Aorta (tissue), 5 donors: ENCODE measurements at regions of chr1 and their contacts with region 1.

Region 1: DNA sequence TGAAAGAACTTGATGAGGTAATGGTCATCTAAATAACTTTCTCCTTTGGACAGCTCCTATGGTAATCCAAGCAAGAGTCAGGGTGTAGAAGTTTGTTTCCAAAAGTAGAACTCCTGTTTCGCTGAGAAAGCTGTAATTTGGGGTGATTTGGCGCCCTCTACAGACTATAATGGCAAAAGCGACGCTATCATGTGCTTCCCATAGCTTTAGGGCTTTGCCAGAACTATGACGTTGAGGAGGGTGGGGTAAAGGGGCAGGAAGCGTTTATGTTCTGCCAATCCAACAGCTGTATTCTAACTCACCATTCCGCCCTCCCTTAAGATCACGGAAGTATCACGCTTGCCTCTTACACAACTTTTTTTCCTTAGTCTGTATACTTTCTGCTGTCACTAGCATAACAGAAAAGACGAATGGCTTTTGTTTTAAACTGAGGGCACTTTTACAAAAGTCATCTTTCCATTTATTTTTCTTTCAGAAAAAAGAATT is at the start of gene FMO4:
- DNase-seq: peak; percentile 83 to 92
- ATAC-seq: peak; percentile 99
- H3K4me3 ChIP-seq: peak within 1 kb of the TSS; percentile 70 to 93
- H3K27ac ChIP-seq: peak within 1 kb of the TSS; percentile 71 to 95
- H3K4me1 ChIP-seq: peaks cover 0 to 3% of the 10 kb centered on the region in 2 donors
- H3K27me3 ChIP-seq: no peaks in the 10 kb centered on the region
- total RNA-seq, gene FMO4: 9.6 to 12.3 TPM

Region 2: DNA sequence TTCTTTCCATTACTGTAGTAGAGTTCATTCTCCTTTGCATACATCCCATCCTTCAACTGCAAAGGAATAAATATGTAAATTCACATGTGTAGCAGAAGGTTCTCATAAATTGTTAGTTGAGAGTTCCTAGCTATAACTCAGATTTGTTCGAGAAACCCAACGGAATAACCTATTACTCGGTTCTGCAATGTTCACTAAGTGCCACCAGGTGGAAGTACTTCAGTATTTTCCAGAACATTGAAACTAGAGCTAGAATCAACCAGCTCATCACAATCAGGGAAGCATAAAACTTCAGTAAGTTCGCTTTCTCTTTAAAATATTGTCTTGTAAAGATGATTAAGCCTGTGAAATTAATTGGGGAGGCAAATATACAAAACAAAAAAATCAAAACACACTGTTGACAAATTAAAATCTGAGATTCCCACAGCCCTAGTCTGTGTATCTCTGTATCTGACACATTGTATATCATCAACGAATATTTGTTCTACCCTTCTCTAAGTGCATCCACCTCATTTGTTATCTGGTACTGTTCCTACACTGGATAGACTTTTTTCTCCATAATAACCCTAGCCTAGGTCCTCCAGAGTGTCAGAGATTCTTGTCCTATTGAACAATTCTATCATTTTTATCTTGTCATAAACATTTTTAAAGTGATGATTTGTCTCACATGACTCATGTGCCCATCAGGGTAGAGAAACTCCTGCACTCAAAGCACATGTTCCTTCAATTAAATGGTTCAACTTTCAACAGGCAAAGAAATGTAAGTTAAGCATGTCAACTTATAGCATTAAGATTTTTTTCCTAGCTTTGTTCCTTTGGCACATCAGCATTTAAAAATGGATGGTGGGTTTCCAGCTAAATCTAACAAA is 346.6 kb before region 1 on chr1:
- intact Hi-C with region 1: loop called (anchors 5 kb)
- DNase-seq: no peak
- ATAC-seq: peak; percentile 85
- H3K4me3 ChIP-seq: no peak overlapping the region
- H3K27ac ChIP-seq: no peak overlapping the region
- H3K4me1 ChIP-seq: peaks cover 0 to 2% of the 10 kb centered on the region in 2 donors
- H3K27me3 ChIP-seq: no peaks in the 10 kb centered on the region

Region 3: DNA sequence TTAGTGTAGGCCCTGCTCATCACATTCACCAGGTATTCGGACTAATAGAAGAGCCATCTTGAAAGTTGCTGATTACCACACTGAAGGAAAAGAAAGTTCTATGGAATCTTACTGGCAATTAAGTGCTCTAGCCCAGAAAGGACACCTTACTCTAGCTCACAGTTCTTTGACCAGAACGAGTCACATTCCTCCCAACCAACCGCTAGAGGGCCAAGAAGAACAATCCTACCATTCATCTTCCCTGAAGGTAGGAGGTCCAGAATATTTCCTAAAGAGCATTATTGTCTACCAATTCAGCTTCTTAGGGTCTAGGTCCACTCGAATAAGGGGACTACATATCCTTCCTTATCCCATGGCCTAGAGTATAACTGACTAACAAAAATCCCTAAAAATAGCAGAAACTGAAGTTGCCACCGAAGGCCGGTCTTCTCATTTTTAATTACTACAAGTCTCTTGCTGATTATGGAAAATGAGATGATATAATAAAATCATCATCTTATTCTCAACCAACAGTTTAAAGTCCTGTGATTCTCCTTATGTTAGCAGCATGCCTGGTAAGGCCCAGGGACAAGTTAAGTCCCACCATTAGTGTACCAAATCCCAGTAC is 68.3 kb before region 1 on chr1:
- intact Hi-C with region 1: loop called (anchors 5 kb)
- DNase-seq: no peak
- ATAC-seq: no peak
- H3K4me3 ChIP-seq: no peak overlapping the region
- H3K27ac ChIP-seq: no peak overlapping the region
- H3K4me1 ChIP-seq: no peaks in the 10 kb centered on the region
- H3K27me3 ChIP-seq: no peaks in the 10 kb centered on the region

Region 4: DNA sequence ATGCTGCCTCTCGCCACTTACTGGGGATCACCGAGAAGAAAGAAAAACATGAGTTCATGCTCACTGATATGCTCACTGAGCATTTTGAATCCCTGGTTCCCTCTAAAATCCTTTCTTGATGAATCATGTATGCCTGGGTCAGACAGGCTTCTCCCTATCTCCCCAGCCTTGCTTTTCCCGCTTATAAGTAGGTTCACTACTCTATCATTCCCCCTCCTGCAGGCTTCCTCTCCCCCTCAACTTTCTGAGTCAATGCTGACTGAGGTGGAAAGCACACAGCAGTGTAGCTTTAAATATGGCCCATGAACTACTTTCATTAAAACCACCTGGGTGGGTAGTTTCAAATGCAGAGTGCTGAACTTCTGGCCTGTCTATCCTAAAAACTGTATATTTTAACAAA is 41.8 kb after region 1 on chr1:
- intact Hi-C with region 1: loop called in 1 of 2 experiments (anchors 5 kb)
- DNase-seq: no peak
- ATAC-seq: peak; percentile 11
- H3K4me3 ChIP-seq: no peak overlapping the region
- H3K27ac ChIP-seq: no peak overlapping the region
- H3K4me1 ChIP-seq: no peaks in the 10 kb centered on the region
- H3K27me3 ChIP-seq: no peaks in the 10 kb centered on the region

Region 5: DNA sequence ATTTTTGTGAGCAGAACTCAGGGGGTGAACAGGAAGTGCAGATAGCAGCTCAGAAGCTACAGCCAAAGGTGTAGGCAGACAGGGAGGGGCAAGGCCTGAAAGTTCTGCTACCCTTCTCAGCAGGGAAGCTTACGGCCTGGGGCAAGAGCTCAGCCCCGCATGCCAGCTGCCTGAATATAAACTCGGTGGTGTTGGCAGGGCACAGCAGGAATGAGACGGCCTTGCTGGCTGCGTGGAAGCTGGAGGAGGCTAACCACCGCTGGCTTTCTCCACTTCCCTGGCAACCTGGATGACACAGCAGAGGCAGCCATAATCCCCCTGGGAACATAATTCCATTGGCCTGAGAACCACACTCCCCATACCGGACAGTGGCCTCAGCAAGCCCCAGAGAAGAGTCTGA is 89.5 kb after region 1 on chr1:
- intact Hi-C with region 1: loop called in 1 of 2 experiments (anchors 10 kb)
- DNase-seq: peak; percentile 60 to 83
- ATAC-seq: no peak
- H3K4me3 ChIP-seq: no peak overlapping the region
- H3K27ac ChIP-seq: peak overlapping the region; percentile 23 to 72
- H3K4me1 ChIP-seq: no peaks in the 10 kb centered on the region
- H3K27me3 ChIP-seq: no peaks in the 10 kb centered on the region

Region 6: DNA sequence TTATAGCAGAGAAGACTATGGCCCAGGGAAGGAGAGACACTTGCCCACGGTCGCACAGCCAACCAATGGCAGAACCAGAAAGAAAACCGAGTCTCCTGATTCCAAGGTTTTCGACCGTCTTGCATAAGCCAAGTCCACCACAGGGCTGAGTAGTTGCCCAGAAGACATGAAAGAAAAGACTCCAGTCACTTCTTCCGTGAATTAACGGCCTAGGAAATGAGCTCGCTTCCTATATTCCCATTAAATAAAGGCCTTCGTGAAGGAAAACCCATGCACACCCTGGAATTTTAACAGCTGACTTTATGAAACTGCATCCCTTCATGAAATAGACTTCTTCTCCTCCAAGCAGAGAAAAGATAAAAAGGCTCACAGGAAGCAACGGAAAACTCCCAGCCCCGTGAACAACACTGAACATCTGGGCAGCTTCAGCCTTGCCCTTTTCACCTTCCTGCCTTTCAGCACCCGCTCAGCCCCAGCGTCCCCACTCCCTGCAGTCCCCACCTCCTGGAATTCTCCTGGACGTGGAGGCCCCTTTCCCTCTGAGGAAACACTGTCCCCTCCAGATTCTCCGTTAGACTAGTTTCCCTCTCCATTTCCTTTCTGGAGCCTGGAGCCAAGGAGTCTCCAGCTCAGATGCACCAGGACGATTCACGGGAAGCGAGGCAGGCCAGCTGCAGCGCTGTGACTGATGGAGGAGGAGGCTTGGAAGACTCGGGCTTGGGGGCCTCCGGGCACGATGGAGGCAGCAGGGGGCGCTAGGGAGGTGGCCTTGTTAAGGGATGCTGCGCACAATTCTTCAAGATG is 341.3 kb after region 1 on chr1:
- intact Hi-C with region 1: loop called in 1 of 2 experiments (anchors 5 kb)
- DNase-seq: peak; percentile 86 to 93
- ATAC-seq: peak; percentile 71
- H3K4me3 ChIP-seq: no peak overlapping the region
- H3K27ac ChIP-seq: peak overlapping the region; percentile 81 to 98
- H3K4me1 ChIP-seq: no peaks in the 10 kb centered on the region
- H3K27me3 ChIP-seq: no peaks in the 10 kb centered on the region